GM12878 (cell line): ENCODE measurements at regions of chr14 and their contacts with region 1.

Region 1: GRCh38 chr14:32560209-32560857 is 231.2 kb downstream of the AKAP6 start:
- DNase-seq: no peak
- ATAC-seq: peak; percentile 85
- H3K4me3 ChIP-seq: no peak overlapping the region
- H3K27ac ChIP-seq: no peak overlapping the region
- H3K4me1 ChIP-seq: no peaks in the 10 kb centered on the region
- H3K27me3 ChIP-seq: no peaks in the 10 kb centered on the region
- CTCF ChIP-seq: peak; percentile 82 to 90 (median 87)
- EP300 ChIP-seq: no peak
- POLR2A ChIP-seq: no peak
- RAD21 ChIP-seq: peak; percentile 88

Region 2: GRCh38 chr14:32259368-32260013 is 300.8 kb before region 1 on chr14:
- CTCF ChIA-PET with region 1: interaction called, 20 read pairs
- POLR2A ChIA-PET with region 1: no interaction called
- RAD21 ChIA-PET with region 1: interaction called, 7 read pairs
- SMC1A ChIA-PET with region 1: interaction called, 9 read pairs
- in situ Hi-C with region 1: no loop called
- intact Hi-C with region 1: loop called (anchors 1 kb)
- DNase-seq: peak; percentile 66
- ATAC-seq: peak; percentile 90
- H3K4me3 ChIP-seq: no peak overlapping the region
- H3K27ac ChIP-seq: peak overlapping the region; percentile 69
- H3K4me1 ChIP-seq: peaks cover 24% of the 10 kb centered on the region
- H3K27me3 ChIP-seq: no peaks in the 10 kb centered on the region
- CTCF ChIP-seq: no peak
- EP300 ChIP-seq: peak; percentile 41 to 45; a peak in 2 of 4 replicates
- POLR2A ChIP-seq: no peak
- RAD21 ChIP-seq: 0 out of 2 replicates have a peak, but pooled peaks have one; percentile 6

Region 3: GRCh38 chr14:32808644-32809043 is 248.3 kb after region 1 on chr14:
- CTCF ChIA-PET with region 1: no interaction called
- POLR2A ChIA-PET with region 1: no interaction called
- RAD21 ChIA-PET with region 1: no interaction called
- SMC1A ChIA-PET with region 1: no interaction called
- in situ Hi-C with region 1: no loop called
- intact Hi-C with region 1: no loop called
- DNase-seq: no peak
- ATAC-seq: no peak
- H3K4me3 ChIP-seq: no peak overlapping the region
- H3K27ac ChIP-seq: no peak overlapping the region
- H3K4me1 ChIP-seq: no peaks in the 10 kb centered on the region
- H3K27me3 ChIP-seq: no peaks in the 10 kb centered on the region
- CTCF ChIP-seq: no peak
- EP300 ChIP-seq: no peak
- POLR2A ChIP-seq: no peak
- RAD21 ChIP-seq: no peak